G401 (cell line): ENCODE measurements at regions of chr4 and their contacts with region 1.

Region 1: GRCh38 chr4:2923141-2923551 is 40.1 kb downstream of the NOP14 start:
- DNase-seq: no peak

Region 2: DNA sequence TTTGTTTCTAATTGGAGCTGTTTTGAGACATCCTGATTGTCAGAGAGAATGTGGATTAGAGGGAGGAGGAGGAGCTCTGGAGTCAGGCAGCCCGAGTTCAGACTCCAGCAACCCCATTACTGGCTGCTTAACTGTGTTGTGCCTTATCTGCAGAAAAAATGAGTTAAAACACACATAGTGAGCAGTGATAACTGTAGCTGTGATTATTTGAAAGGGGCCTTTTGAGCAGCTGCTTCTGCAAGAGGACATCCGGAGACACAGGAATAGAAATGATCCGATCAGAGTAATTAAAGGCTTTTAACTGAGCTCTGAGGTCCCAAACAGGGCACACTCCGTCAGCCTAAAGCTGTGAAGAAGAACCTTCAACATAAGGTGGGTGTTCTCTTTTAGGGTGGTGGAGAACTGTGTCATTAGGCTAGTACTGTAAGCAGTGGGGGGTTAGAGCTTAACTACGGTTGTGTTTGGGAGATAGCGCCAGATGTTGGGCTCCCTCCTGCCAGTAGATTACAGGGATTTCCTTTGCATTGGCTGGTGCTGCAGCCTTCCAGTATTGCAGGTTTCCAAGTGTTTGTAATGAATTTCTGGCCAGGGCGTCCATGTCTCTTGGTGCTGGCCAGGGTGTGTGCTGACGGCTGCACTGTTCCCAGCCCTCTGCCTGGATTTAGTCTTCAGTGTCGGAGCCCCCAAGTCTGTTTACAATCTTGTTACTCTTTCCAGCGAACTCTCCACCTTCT is 55.2 kb before region 1 on chr4:
- in situ Hi-C with region 1: loop called (anchors 5 kb)
- DNase-seq: no peak

Region 3: DNA sequence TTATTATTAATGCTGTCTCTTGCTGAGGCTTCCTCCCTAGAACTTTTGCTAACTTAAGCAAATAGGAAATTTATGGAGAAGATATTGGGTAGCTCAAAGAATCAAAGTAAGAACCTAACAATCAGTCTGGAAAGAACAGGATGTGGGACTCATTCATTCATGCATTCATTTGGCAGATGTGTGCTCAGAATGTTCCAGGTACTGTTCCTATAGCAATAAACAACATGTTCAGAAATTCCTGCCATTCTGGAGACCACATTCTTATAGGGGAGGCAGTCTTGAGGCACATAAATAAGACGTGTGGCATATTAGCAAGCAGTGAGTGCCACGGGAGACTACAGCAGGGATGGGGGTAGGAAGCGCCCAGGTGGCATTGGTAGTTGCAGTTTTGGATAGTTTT is 45.2 kb after region 1 on chr4:
- in situ Hi-C with region 1: no loop called
- DNase-seq: no peak